ENCODE measurements at regions of chr12 and their contacts with region 1.

Region 1: GRCh38 chr12:29103539-29103974 is 45.5 kb upstream of the FAR2 start:
- DNase-seq: peak; percentile 58
- H3K4me3 Mint-ChIP-seq: peak overlapping the region; percentile 34
- H3K27ac Mint-ChIP-seq: peak overlapping the region; percentile 75
- H3K4me1 Mint-ChIP-seq: peaks cover 31% of the 10 kb centered on the region
- H3K27me3 Mint-ChIP-seq: peaks cover 10% of the 10 kb centered on the region

Region 2: GRCh38 chr12:28190321-28191050 is 913.1 kb before region 1 on chr12 and contains the start of gene CCDC91:
- intact Hi-C with region 1: loop called (anchors 2 kb)
- DNase-seq: peak; percentile 79
- H3K4me3 Mint-ChIP-seq: peak within 1 kb of the TSS; percentile 91
- H3K27ac Mint-ChIP-seq: peak within 1 kb of the TSS; percentile 96
- H3K4me1 Mint-ChIP-seq: peaks cover 39% of the 10 kb centered on the region
- H3K27me3 Mint-ChIP-seq: no peaks in the 10 kb centered on the region
- total RNA-seq, gene CCDC91: 12.9 and 15.0 TPM in 2 replicates

Region 3: DNA sequence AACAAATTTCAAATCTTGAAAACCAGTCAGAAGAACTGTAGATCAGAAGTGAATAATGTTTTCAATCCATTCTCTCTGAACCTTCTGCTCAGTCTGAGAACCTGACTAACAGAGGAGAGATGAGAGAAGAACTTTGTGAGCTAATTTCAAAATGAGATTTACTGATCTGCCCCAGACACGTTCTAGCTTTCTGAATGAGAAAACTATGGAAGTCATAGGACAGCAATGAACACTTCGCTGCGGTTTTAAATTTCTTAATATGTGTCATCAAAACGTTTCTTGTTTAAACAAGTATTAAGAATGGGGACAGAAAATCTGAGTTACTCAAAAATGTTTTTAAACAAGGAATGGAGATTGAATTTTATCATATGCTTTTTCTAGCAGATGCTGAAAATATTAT is 21.0 kb before region 1 on chr12:
- intact Hi-C with region 1: loop called (anchors 1 kb)
- DNase-seq: no peak
- H3K4me3 Mint-ChIP-seq: no peak overlapping the region
- H3K27ac Mint-ChIP-seq: no peak overlapping the region
- H3K4me1 Mint-ChIP-seq: no peaks in the 10 kb centered on the region
- H3K27me3 Mint-ChIP-seq: peaks cover 39% of the 10 kb centered on the region

Region 4: GRCh38 chr12:29148911-29149690 is 45.5 kb after region 1 on chr12 and contains the start of gene FAR2:
- intact Hi-C with region 1: loop called (anchors 1 kb)
- DNase-seq: peak; percentile 37
- H3K4me3 Mint-ChIP-seq: peak within 1 kb of the TSS; percentile 91
- H3K27ac Mint-ChIP-seq: peak within 1 kb of the TSS; percentile 93
- H3K4me1 Mint-ChIP-seq: peaks cover 17% of the 10 kb centered on the region
- H3K27me3 Mint-ChIP-seq: peaks cover 31% of the 10 kb centered on the region
- total RNA-seq, gene FAR2: 5.2 and 5.4 TPM in 2 replicates

Region 5: GRCh38 chr12:29164477-29165393 is 61.2 kb after region 1 on chr12:
- intact Hi-C with region 1: loop called (anchors 5 kb)
- DNase-seq: no peak
- H3K4me3 Mint-ChIP-seq: no peak overlapping the region
- H3K27ac Mint-ChIP-seq: peak overlapping the region; percentile 19
- H3K4me1 Mint-ChIP-seq: peaks cover 22% of the 10 kb centered on the region
- H3K27me3 Mint-ChIP-seq: peaks cover 5% of the 10 kb centered on the region

Region 6: GRCh38 chr12:29241821-29242591 is 138.4 kb after region 1 on chr12:
- intact Hi-C with region 1: loop called (anchors 1 kb)
- DNase-seq: no peak
- H3K4me3 Mint-ChIP-seq: no peak overlapping the region
- H3K27ac Mint-ChIP-seq: peak overlapping the region; percentile 21
- H3K4me1 Mint-ChIP-seq: peaks cover 22% of the 10 kb centered on the region
- H3K27me3 Mint-ChIP-seq: peaks cover 4% of the 10 kb centered on the region

Region 7: GRCh38 chr12:29807125-29807524 is 703.6 kb after region 1 on chr12:
- intact Hi-C with region 1: no loop called
- DNase-seq: no peak
- H3K4me3 Mint-ChIP-seq: no peak overlapping the region
- H3K27ac Mint-ChIP-seq: no peak overlapping the region
- H3K4me1 Mint-ChIP-seq: no peaks in the 10 kb centered on the region
- H3K27me3 Mint-ChIP-seq: peaks cover 1% of the 10 kb centered on the region